ENCODE measurements at regions of chr1 and their contacts with region 1.

Region 1: DNA sequence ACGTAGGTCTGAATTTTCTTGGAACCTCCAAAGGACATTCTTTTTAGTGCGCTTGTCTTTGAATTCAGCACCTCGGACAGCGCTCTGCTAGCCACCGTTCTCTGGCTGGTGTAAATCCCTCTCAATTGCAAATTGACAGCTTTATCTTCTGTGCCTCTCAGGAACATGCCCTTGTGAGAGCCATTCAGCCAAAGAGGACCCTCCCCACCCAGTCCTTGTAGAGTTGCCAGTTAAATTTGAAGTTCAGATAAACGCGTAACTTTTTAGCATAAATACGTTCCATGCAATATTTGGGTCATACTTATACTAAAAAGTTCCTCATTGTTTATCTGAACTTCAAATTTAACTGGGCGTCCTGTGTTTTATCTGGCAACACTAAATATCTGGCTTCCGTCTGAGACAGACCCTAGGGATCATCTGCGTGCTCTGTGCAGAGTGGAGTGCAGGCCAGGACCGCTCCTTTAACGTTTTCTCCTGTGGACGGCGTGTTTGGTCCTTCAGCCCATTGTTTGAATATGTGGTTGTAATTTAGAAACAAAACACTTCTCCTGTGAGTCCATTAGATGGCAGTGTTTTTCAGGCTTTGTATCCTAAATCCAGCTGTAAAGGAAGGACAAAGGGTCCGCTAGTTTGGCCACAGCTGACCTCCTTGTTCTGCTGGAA is 7.0 kb downstream of the KCNAB2 start:
- DNase-seq: peak; percentile 61
- H3K4me3 ChIP-seq: no peak overlapping the region
- H3K27ac ChIP-seq: no peak overlapping the region
- H3K4me1 ChIP-seq: peaks cover 12% of the 10 kb centered on the region
- H3K27me3 ChIP-seq: no peaks in the 10 kb centered on the region
- CTCF ChIP-seq: peak; percentile 63

Region 2: DNA sequence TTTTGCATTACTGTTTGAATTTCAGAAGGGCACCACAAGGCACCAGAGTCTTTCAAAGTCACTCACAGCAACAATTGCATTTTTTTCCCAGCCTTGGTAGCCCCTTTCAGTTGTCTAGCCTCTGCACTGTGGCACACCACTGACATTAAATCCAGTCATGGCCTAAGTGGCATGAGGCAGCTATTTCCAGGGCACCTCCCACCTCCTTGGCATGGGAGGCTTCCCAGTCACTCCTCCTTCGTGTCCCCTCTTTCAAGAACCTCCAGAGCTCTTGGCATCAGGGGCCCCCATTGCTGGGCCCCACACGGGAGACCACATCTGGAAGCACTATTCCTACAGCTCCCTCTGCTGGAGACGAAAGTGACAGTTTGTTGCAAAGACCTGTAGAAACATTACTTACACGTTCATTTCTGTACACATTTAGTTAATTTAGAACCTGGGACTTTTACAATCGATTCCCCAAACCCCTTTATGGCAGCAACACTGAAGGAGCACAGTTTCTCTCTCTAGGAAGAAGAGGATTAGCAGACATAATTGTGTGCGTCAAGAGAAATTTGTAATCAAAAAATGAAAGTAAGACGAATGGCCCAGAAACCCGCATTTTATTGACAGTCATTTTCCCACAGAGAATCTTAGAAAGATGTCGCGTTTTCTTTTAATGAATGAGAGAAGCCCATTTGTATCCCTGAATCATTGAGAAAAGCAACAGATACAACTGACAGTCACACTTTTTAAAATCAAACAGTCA is 133.1 kb after region 1 on chr1:
- intact Hi-C with region 1: loop called (anchors 10 kb)
- DNase-seq: no peak
- H3K4me3 ChIP-seq: no peak overlapping the region
- H3K27ac ChIP-seq: no peak overlapping the region
- H3K4me1 ChIP-seq: peaks cover 7% of the 10 kb centered on the region
- H3K27me3 ChIP-seq: peaks cover 6% of the 10 kb centered on the region
- CTCF ChIP-seq: peak; percentile 55

Region 3: GRCh38 chr1:6259491-6260425 is 207.1 kb after region 1 on chr1:
- intact Hi-C with region 1: loop called (anchors 10 kb)
- DNase-seq: peak; percentile 87
- H3K4me3 ChIP-seq: peak overlapping the region; percentile 79
- H3K27ac ChIP-seq: peak overlapping the region; percentile 72
- H3K4me1 ChIP-seq: peaks cover 51% of the 10 kb centered on the region
- H3K27me3 ChIP-seq: peaks cover 74% of the 10 kb centered on the region
- CTCF ChIP-seq: no peak